Left cardiac atrium (tissue), 4 donors: ENCODE measurements at regions of chr4 and their contacts with region 1.

Region 1: GRCh38 chr4:127604949-127605709 is 27.6 kb upstream of the INTU start:
- DNase-seq: no peak
- ATAC-seq: no peak

Region 2: GRCh38 chr4:127217586-127218229 is 387.4 kb before region 1 on chr4:
- intact Hi-C with region 1: no loop called
- DNase-seq: no peak
- ATAC-seq: no peak

Region 3: DNA sequence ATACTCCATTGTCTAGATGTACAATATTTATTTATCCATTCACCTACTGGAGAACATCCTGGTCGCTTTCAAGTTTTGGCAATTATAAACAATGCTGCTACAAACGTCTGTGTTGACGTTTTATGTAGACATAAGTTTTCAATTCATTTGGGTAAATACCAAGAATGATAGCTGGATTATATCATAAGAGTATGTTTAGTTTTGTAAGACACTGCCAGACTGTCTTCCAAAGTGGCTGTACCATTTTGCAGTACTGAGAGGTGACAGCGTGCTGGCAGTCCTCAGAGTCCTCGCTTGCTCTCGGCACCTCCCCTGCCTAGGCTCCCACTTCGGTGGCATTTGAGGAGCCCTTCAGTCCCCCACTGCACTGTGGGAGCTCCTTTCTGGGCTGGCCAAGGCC is 225.6 kb before region 1 on chr4:
- intact Hi-C with region 1: no loop called
- DNase-seq: no peak
- ATAC-seq: no peak

Region 4: DNA sequence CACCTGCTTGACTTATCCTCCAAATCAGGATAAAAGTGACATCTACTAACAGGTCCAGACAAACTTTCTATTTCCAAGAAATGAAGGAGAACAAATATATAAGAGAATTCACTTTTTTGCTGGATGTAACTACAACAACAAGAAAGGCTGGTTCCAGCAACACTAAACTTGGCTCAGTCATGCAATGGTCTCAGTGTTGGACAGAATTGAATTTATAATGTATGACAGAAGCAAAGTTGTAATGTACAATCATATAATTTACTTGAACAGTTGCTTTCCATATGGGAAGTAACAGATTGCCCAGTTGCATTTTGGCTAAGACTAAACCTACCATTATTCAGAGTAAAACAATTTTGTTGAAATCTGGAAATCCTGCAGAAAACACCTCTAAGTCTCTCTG is 155.7 kb before region 1 on chr4:
- intact Hi-C with region 1: no loop called
- DNase-seq: no peak
- ATAC-seq: no peak

Region 5: GRCh38 chr4:127533028-127533700 is 72.0 kb before region 1 on chr4:
- intact Hi-C with region 1: no loop called
- DNase-seq: peak; percentile 75
- ATAC-seq: peak; percentile 96 to 99

Region 6: DNA sequence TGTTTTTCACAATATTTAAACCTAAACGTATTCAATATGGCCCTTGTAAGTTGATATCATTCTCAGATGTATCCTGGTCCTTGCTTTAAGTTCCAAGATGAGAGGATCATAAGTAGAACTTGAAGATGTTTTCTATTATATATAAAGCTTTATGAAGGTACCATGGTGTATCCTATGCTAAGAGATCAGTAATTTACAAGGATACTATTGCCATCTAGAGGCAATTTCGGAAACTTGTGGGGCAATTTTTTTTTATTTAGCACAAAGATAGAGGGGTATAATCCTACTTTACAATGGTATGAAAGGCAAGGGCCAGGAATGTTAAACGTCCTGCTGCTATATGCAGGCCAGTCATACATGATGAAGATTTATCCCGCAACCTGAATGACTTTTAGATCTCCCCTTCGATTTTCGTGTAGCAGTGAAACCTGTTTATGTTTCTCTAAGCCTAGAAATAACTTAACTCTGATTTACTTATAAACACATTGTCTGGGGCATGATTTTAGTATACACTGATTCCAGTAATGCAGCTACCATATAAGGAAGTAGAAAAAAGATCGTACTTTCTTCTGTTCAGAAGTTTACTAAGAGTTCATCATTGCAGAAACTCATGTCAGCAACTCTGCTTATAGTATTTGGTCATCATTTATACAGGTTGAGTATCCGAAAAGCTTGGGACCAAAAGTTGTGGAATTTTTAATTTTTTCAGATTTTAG is 127.6 kb after region 1 on chr4:
- intact Hi-C with region 1: loop called (anchors 1 to 5 kb)
- DNase-seq: no peak
- ATAC-seq: peak in 1 of 2 donors; percentile 27